ENCODE measurements at regions of chr6 and their contacts with region 1.

Region 1: GRCh38 chr6:6696867-6697531 is 108.5 kb downstream of the LY86 start:
- DNase-seq: peak; percentile 65
- ATAC-seq: peak; percentile 35
- H3K4me3 Mint-ChIP-seq: no peak overlapping the region
- H3K27ac Mint-ChIP-seq: peak overlapping the region; percentile 77
- H3K4me1 Mint-ChIP-seq: peaks cover 38% of the 10 kb centered on the region
- H3K27me3 Mint-ChIP-seq: peaks cover 14% of the 10 kb centered on the region

Region 2: GRCh38 chr6:6707143-6707542 is 10.1 kb after region 1 on chr6:
- CTCF ChIA-PET with region 1: interaction called, 15 read pairs
- POLR2A ChIA-PET with region 1: interaction called, 4 read pairs
- DNase-seq: no peak
- ATAC-seq: no peak
- H3K4me3 Mint-ChIP-seq: no peak overlapping the region
- H3K27ac Mint-ChIP-seq: no peak overlapping the region
- H3K4me1 Mint-ChIP-seq: peaks cover 23% of the 10 kb centered on the region
- H3K27me3 Mint-ChIP-seq: peaks cover 31% of the 10 kb centered on the region

Region 3: DNA sequence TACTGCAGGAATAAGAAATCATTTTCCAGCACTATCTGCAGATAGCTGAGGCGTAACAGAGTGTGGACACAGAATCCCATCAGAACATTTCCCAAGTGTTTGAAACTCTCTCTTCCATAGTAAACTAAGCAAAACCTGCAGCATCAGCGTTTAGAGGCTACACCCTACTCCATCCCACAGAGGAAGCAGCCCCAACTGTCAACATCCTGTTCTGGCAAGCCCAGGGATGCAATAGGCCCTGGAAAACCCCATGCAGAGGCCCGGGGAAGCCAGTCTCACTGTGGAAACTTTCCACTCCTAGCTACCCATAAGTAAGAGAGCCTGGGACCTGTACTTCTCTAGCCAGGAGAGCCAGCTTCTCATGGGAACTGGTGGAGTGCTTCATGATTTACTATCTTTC is 21.0 kb after region 1 on chr6:
- CTCF ChIA-PET with region 1: interaction called, 19 read pairs
- POLR2A ChIA-PET with region 1: interaction called, 3 read pairs
- DNase-seq: no peak
- ATAC-seq: peak; percentile 38
- H3K4me3 Mint-ChIP-seq: no peak overlapping the region
- H3K27ac Mint-ChIP-seq: no peak overlapping the region
- H3K4me1 Mint-ChIP-seq: peaks cover 26% of the 10 kb centered on the region
- H3K27me3 Mint-ChIP-seq: peaks cover 13% of the 10 kb centered on the region

Region 4: GRCh38 chr6:6861995-6862394 is 165.0 kb after region 1 on chr6:
- CTCF ChIA-PET with region 1: no interaction called
- POLR2A ChIA-PET with region 1: no interaction called
- DNase-seq: no peak
- ATAC-seq: no peak
- H3K4me3 Mint-ChIP-seq: no peak overlapping the region
- H3K27ac Mint-ChIP-seq: no peak overlapping the region
- H3K4me1 Mint-ChIP-seq: no peaks in the 10 kb centered on the region
- H3K27me3 Mint-ChIP-seq: peaks cover 2% of the 10 kb centered on the region

Measured in activated CD8-positive, alpha-beta T cell treated with anti-CD3 and anti-CD28 coated beads, Interleukin-2, amount 10 ng/mL, durations not matched to agents 7 days and 5 days (primary cell).